Astrocyte of the cerebellum (primary cell): ENCODE measurements at regions of chr2 and their contacts with region 1.

Region 1: GRCh38 chr2:177164584-177165052 is 48.0 kb upstream of the HNRNPA3 start:
- DNase-seq: peak; percentile 50
- H3K4me3 ChIP-seq: peak overlapping the region; percentile 9
- CTCF ChIP-seq: peak; percentile 100

Region 2: DNA sequence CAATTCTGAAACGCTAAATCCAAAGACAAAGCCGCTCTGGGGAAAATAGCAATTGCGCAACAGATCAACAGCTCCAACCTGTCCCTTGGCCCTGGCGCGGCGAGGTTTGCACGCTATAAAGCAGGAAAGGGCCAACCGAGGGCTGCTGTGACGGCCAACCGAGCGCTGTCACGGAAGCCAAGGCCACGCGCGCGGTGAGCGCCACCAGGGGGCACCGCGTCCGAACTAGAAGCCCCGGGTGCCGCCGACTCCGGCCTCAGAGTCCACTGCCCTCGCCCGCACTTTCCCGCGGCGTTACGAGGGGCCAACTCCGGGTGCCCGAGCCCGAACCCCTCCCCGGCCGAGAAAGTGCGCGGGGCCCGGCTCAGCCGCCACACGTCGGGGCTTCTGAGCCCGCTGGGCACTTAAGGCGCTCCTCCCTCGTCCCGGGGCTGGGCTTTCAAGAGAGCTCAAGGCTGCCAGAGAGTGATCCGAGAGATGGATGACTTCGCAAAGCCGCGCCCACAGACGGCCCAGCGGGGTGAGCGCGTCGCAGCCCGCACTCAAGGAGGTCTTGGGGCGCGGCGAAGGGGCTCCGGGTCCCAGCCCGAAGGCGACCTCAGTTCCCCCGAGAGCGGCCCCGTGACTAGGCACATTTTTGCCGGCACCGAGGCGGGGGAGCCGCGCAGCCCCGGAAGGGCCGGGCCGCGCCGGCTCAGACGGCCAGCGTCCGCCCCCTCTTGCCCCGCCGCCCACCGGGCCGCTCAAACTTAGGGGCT is 99.0 kb after region 1 on chr2:
- in situ Hi-C with region 1: loop called (anchors 5 kb)
- DNase-seq: peak; percentile 96
- H3K4me3 ChIP-seq: peak overlapping the region; percentile 81
- CTCF ChIP-seq: peak; percentile 83

Region 3: GRCh38 chr2:177332041-177332991 is 167.7 kb after region 1 on chr2:
- in situ Hi-C with region 1: loop called (anchors 5 kb)
- DNase-seq: peak; percentile 72
- H3K4me3 ChIP-seq: no peak overlapping the region
- CTCF ChIP-seq: peak; percentile 62

Region 4: DNA sequence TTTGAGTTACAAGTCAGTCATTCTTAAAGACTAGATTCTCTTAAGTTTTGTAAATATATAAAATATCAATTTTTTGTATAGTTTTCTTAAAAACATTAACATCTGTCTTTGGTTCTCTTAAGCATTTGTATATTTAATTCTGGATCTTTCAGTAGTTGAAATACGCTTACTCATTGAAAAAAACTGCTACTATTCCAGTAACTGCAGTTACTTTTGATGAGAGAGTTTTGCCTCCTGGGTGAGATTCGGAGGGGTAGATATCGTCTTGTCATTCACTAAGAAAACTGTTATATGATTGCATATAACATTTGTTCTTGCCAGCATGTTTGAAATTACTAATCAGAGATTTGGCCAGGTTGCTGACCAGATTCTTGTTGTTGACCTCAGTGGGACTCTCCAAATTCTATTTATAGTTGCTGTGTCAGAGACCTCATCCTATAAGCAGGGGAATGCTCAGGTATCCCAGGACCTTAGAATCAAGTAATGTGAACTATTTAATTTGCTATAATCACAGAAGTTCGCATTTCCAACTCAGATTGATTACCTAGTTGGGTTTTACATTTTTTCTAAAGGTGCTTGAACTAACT is 235.8 kb after region 1 on chr2:
- in situ Hi-C with region 1: loop called (anchors 10 kb)
- DNase-seq: no peak
- H3K4me3 ChIP-seq: no peak overlapping the region
- CTCF ChIP-seq: no peak

Region 5: GRCh38 chr2:177763532-177764265 is 599.1 kb after region 1 on chr2:
- in situ Hi-C with region 1: loop called (anchors 25 kb)
- DNase-seq: peak; percentile 44
- H3K4me3 ChIP-seq: no peak overlapping the region
- CTCF ChIP-seq: peak; percentile 81